ENCODE measurements at regions of chr1 and their contacts with region 1.

Region 1: DNA sequence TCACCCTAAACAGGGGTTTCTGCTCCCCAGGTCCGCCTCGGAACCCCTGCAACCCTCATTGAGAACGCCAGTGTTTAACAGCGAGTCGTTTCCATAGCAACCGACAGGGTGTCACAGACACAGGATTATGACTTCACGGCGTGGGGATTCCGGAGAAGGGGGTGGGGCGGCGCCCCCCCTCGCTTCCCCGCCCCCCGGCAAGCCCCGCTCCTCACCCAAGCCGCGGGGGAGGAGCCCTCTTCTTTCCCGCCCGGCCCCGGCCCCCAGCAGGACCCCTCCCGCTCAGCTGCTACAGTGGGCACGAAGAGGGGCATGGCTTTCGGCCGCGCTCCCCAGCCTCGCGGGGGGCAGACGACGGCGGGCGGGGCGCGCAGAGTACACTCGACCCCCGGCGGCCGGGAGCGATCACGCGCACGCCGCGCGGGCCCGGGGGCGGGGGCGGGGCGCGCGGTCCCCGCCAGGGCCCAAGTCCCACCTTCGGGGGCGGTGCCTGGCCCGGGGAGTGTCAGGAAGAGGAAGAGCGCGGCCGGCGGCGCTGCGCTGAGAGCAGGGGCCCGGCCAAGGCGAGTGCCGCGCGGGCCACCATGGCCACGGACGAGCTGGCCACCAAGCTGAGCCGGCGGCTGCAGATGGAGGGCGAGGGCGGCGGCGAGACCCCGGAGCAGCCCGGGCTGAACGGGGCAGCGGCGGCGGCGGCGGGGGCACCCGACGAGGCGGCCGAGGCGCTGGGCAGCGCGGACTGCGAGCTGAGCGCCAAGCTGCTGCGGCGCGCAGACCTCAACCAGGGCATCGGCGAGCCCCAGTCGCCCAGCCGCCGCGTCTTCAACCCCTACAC is at the start of gene EFHD2:
- DNase-seq: peak; percentile 46 to 90
- H3K4me3 ChIP-seq: peak within 1 kb of the TSS; percentile 95 to 96
- H3K27ac ChIP-seq: peak within 1 kb of the TSS; percentile 52 to 59
- H3K4me1 ChIP-seq: peaks cover 10 to 35% of the 10 kb centered on the region in 2 donors
- H3K27me3 ChIP-seq: no peaks in the 10 kb centered on the region
- CTCF ChIP-seq: no peak
- total RNA-seq, gene EFHD2: 116 TPM

Region 2: GRCh38 chr1:15152318-15153183 is 257.1 kb before region 1 on chr1:
- intact Hi-C with region 1: loop called (anchors 10 kb)
- DNase-seq: peak; percentile 44 to 90
- H3K4me3 ChIP-seq: peak overlapping the region; percentile 78 to 91
- H3K27ac ChIP-seq: peak overlapping the region; percentile 74 to 82
- H3K4me1 ChIP-seq: peaks cover 0 to 3% of the 10 kb centered on the region in 2 donors
- H3K27me3 ChIP-seq: no peaks in the 10 kb centered on the region
- CTCF ChIP-seq: peak; percentile 35 to 71 (median 59)

Region 3: DNA sequence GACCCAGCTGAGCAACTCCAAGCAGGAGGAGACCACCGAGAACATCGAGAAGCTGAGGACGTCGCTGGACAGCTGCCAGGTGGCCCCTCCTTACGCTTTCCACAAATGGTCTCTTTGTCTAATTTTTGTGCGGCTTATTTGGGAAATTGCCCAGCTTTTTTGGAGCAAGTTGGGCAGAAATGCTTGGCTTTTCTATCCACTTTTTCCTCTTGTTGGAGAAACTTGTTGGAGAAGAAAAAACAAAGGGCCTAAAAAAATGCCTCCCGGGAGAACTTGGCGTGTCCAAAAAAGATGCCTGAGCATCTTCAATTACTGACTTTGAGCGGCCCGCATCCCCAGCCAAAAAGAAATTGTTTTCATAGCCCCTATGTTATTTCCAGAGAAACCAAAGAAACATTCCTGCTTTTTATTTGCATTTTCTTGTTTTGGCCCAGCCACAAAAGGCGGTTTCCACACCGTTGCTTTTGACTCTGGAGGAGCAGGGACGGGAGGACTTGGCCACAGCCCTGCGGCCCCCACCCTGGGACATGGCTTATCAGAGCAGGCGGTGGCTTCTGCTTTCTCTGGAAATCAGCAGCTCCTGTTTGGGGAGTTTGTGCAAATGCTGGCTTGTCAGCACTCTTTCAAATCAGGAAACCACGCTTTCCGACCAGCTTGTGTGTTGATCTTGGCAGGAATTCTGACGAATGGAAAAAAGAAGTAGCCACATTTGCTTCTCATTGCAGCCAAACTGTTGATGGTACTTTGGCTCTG is 81.1 kb before region 1 on chr1:
- intact Hi-C with region 1: loop called (anchors 5 kb)
- DNase-seq: no peak
- H3K4me3 ChIP-seq: peak overlapping the region; percentile 7 to 28
- H3K27ac ChIP-seq: no peak overlapping the region
- H3K4me1 ChIP-seq: peaks cover 9 to 16% of the 10 kb centered on the region in 2 donors
- H3K27me3 ChIP-seq: no peaks in the 10 kb centered on the region
- CTCF ChIP-seq: no peak

Region 4: GRCh38 chr1:15337656-15338402 is 71.8 kb before region 1 on chr1:
- intact Hi-C with region 1: loop called (anchors 2 kb)
- DNase-seq: peak; percentile 48 to 82
- H3K4me3 ChIP-seq: peak overlapping the region in 1 of 2 donors; percentile 20
- H3K27ac ChIP-seq: peak overlapping the region; percentile 46 to 54
- H3K4me1 ChIP-seq: peaks cover 2 to 22% of the 10 kb centered on the region in 2 donors
- H3K27me3 ChIP-seq: no peaks in the 10 kb centered on the region
- CTCF ChIP-seq: no peak

Region 5: GRCh38 chr1:15370781-15371520 is 38.7 kb before region 1 on chr1:
- intact Hi-C with region 1: loop called (anchors 5 kb)
- DNase-seq: no peak
- H3K4me3 ChIP-seq: no peak overlapping the region
- H3K27ac ChIP-seq: no peak overlapping the region
- H3K4me1 ChIP-seq: peaks cover 0 to 4% of the 10 kb centered on the region in 2 donors
- H3K27me3 ChIP-seq: no peaks in the 10 kb centered on the region
- CTCF ChIP-seq: no peak